ENCODE measurements at regions of chr5 and their contacts with region 1.

Region 1: DNA sequence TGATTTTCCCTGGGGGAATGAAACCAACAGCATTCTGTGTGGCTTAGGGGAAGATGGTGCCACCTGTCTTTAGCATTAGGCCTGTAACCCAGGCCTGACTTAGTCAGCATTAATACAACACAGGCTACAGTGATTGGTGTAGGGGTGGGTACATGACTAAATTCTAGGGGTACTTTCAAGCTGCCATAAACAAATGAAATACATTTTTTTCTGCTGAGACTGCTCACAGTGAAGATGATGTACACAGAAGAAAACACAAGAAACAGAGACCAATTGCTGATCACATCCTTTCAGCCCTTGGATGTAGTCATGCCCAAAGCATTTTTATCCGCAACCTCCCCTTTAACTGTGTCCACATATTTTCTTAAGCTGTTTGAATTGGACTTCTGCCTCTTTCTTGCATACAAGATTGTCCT is 527.2 kb downstream of the KCTD16 start:
- DNase-seq: peak; percentile 88
- H3K4me3 Mint-ChIP-seq: no peak overlapping the region
- H3K27ac Mint-ChIP-seq: peak overlapping the region; percentile 73
- H3K4me1 Mint-ChIP-seq: peaks cover 19% of the 10 kb centered on the region
- H3K27me3 Mint-ChIP-seq: no peaks in the 10 kb centered on the region
- CTCF ChIP-seq: peak; percentile 18

Region 2: DNA sequence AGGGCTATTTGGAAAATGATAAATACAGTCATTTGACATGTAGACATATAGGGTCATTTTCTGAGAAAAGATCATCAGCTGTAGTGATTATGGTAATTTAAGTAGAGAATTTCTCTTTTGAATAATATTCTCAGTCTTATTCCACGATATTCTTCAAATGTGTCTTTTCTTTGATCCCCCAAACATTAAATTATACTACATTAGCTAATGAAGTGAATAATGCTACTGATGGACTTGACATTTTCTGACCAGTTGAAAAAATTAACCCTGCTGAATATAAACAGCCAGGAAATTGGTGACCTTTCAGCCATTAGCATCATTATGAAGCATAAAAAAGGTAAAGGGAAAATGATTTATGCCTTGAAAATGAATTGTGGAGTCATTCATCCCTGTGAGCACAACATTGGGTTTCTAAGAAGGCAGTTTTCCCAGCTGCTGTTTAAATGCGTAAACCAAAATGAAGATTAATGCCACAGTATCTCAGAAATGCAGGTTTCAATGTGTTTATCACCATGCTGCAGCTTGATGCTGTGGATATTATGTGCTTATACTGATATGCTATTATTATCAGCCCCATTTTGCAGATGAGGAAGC is 38.1 kb before region 1 on chr5:
- CTCF ChIA-PET with region 1: no interaction called
- POLR2A ChIA-PET with region 1: no interaction called
- intact Hi-C with region 1: no loop called
- DNase-seq: no peak
- H3K4me3 Mint-ChIP-seq: no peak overlapping the region
- H3K27ac Mint-ChIP-seq: no peak overlapping the region
- H3K4me1 Mint-ChIP-seq: no peaks in the 10 kb centered on the region
- H3K27me3 Mint-ChIP-seq: no peaks in the 10 kb centered on the region
- CTCF ChIP-seq: no peak

Region 3: GRCh38 chr5:144712090-144712489 is 14.2 kb after region 1 on chr5:
- CTCF ChIA-PET with region 1: no interaction called
- POLR2A ChIA-PET with region 1: no interaction called
- intact Hi-C with region 1: no loop called
- DNase-seq: no peak
- H3K4me3 Mint-ChIP-seq: no peak overlapping the region
- H3K27ac Mint-ChIP-seq: no peak overlapping the region
- H3K4me1 Mint-ChIP-seq: no peaks in the 10 kb centered on the region
- H3K27me3 Mint-ChIP-seq: no peaks in the 10 kb centered on the region
- CTCF ChIP-seq: no peak

Region 4: DNA sequence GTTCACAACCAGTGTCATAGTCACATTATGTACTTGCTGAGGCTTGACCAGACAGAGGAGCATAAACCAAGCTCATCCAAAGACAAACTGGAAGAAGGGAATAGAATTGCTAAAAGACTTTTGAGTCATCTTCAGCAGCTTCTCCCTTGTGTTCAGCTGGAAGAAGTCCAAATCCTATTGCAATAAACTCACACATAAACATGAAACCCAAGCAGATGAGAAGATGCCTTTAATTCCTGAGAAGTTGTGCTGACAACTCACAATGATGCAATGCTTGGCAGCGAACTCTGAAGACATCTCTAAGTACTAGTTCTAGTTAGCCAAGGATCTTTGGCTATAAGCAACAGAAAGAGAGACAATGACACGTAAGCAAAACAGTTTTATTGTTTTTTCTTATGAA is 114.9 kb after region 1 on chr5:
- CTCF ChIA-PET with region 1: no interaction called
- POLR2A ChIA-PET with region 1: interaction called, 3 read pairs
- intact Hi-C with region 1: loop called (anchors 1 kb)
- DNase-seq: peak; percentile 99
- H3K4me3 Mint-ChIP-seq: no peak overlapping the region
- H3K27ac Mint-ChIP-seq: peak overlapping the region; percentile 96
- H3K4me1 Mint-ChIP-seq: peaks cover 18% of the 10 kb centered on the region
- H3K27me3 Mint-ChIP-seq: no peaks in the 10 kb centered on the region
- CTCF ChIP-seq: no peak